AG04449 (cell line): ENCODE measurements at regions of chr12 and their contacts with region 1.

Region 1: DNA sequence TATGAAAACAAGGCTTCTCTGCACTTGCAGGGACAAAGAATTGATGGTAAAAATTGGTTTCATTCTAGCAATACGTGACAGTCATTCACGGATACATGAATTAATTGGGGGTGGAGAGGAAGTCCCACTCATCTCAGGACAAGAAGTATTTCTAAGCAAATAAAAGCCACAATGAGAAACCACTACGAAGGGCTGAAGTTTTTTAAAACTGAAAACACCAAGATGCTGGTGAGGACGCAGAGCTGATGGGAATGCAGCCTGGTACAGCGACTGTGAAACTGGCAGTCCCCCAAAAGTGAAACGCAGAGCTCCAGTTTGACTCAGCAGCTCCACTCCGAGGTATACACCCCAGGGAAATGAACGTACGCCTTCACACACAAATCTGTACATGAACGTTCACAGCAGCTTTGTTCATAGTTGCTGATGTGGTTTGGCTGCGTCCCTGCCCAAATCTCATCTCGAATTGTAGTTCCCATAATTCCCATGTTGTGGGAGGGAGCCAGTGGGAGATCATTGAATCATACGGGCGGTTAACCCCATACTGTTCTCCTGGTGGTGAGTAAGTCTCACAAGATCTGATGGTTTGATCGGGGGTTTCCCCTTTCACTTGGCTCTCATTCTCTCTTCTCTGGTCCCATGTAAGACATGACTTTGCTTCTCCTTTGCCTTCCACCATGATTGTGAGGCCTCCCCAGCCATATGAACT is 89.0 kb downstream of the SCARB1 start:
- DNase-seq: peak; percentile 76
- H3K4me3 ChIP-seq: peak overlapping the region; percentile 38
- CTCF ChIP-seq: no peak

Region 2: GRCh38 chr12:124742111-124742510 is 32.5 kb before region 1 on chr12:
- CTCF ChIA-PET with region 1: no interaction called
- POLR2A ChIA-PET with region 1: no interaction called
- DNase-seq: no peak
- H3K4me3 ChIP-seq: no peak overlapping the region
- CTCF ChIP-seq: no peak

Region 3: GRCh38 chr12:124786061-124786964 is 11.7 kb after region 1 on chr12:
- CTCF ChIA-PET with region 1: interaction called, 13 read pairs
- POLR2A ChIA-PET with region 1: interaction called, 4 read pairs
- DNase-seq: peak; percentile 42
- H3K4me3 ChIP-seq: peak overlapping the region; percentile 54
- CTCF ChIP-seq: no peak

Region 4: GRCh38 chr12:124884587-124885438 is 110.2 kb after region 1 on chr12:
- CTCF ChIA-PET with region 1: no interaction called
- POLR2A ChIA-PET with region 1: no interaction called
- DNase-seq: no peak
- H3K4me3 ChIP-seq: no peak overlapping the region
- CTCF ChIP-seq: no peak